ENCODE measurements at regions of chr14 and their contacts with region 1.

Region 1: DNA sequence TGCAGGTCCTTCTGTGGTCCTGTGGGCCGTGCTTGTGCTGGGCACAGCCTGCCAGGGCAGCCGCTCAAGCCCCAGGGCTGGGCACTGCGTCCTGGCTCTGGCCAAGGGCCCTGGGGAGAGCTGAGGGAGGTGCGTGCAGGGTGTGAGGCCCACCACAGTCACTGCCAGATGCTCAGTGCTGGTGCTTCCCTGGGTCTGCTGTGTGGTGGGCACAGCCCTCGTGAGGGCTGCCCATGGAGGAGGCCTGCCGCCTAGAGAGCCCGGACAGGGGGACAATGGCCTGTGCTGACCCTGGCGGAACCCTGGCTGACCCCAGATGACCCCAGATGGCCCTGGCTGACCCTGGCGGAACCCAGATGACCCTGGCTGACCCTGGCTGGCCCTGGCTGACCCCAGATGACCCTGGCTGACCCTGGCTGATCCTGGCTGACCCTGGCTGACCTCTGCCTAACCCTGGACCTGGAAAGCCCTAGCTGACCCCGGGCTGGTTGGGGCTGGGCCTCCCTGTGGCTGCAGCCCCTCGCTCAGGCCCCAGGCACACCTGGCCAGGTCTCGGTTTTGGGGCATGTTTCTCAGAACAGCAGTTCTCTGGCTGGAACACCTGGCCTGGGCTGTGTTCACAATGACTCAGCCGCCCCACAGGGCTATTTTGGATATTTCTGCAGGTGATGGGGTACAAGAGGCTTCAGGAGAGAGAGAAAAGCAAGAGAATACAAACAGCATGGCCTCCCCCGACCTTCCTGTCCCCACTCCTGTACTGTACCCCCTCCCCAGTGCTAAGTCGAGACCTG is 55.4 kb downstream of the TMEM121 start:
- DNase-seq: no peak
- ATAC-seq: no peak
- H3K4me3 ChIP-seq: no peak overlapping the region
- H3K27ac ChIP-seq: no peak overlapping the region
- H3K4me1 ChIP-seq: no peaks in the 10 kb centered on the region
- H3K27me3 ChIP-seq: no peaks in the 10 kb centered on the region
- CTCF ChIP-seq: no peak

Region 2: GRCh38 chr14:105537369-105538164 is 44.2 kb before region 1 on chr14:
- intact Hi-C with region 1: no loop called
- DNase-seq: peak; percentile 54 to 67
- ATAC-seq: peak; percentile 48 to 76 (median 67)
- H3K4me3 ChIP-seq: no peak overlapping the region
- H3K27ac ChIP-seq: no peak overlapping the region
- H3K4me1 ChIP-seq: peaks cover 0 to 7% (median 4%) of the 10 kb centered on the region in 9 donors
- H3K27me3 ChIP-seq: peaks cover 0 to 36% (median 18%) of the 10 kb centered on the region in 7 donors
- CTCF ChIP-seq: peak; percentile 96 to 99 (median 98)

Region 3: DNA sequence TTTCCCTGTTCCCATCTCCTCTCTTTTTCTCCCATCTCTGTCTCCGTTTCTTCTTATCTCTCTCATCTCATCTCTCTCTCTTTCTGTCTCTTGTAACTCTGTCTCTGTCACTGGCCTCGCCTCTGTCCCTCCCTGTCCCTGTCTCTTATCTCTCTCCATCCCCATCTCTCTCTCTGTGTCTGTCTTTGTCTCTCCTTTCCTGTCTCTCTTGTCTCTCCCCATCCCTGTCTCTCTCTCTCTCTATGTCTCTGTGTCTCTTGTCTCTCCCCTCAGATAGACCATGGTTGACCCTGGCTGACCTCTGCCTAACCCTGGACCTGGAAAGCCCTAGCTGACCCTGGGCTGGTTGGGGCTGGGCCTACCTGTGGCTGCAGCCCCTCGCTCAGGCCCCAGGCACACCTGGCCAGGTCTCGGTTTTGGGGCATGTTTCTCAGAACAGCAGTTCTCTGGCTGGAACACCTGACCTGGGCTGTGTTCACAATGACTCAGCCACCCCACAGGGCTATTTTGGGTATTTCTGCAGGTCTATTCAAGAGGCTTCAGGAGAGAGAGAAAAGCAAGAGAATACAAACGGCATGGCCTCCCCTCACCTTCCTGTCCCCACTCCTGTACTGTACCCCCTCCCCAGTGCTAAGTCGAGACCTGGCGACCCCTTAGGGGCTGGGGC is 119.0 kb after region 1 on chr14:
- intact Hi-C with region 1: loop called in 8 of 10 experiments (anchors 2 to 5 kb)
- DNase-seq: no peak
- ATAC-seq: peak in 2 of 8 donors; percentile 4 to 18
- H3K4me3 ChIP-seq: no peak overlapping the region
- H3K27ac ChIP-seq: no peak overlapping the region
- H3K4me1 ChIP-seq: no peaks in the 10 kb centered on the region
- H3K27me3 ChIP-seq: peaks cover 0 to 2% (median 0%) of the 10 kb centered on the region in 7 donors
- CTCF ChIP-seq: no peak

Measured in heart right ventricle (tissue), 16 donors.